ENCODE measurements at regions of chr1 and their contacts with region 1.

Region 1: DNA sequence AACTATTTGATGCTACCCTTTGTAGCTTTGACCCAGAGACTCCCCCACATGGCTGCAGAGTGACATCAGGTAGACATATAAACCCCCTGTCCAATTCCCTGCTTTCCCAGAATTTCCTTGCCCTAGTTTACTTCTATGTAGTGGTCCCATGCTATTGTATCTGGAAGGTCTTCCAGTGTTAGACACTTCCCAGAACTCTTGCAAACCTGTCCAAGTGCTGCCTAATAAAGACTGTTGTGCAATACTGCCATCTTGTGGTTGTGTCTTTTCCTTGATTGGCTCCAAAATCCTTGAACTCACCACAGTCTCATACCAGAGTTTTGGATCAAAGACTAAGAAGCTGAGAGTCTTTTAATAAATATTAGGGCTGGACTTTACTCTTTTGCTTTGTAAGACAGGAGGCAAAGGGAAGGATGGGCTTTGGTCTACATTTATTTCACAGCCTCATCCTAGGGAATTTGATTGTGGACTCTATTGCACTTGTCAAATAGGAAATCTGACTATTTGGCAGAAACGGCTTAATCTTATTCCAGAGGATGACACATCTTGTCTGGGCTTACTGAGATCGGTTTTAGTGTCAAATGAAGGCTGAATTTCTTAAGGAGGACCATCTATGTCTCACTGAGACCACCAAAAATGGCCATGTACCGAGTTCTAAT is 169.9 kb downstream of the LRRC7 start:
- DNase-seq: peak; percentile 11 to 52 (median 28)
- H3K4me3 ChIP-seq: no peak overlapping the region
- H3K27ac ChIP-seq: no peak overlapping the region
- H3K4me1 ChIP-seq: no peaks in the 10 kb centered on the region
- H3K27me3 ChIP-seq: no peaks in the 10 kb centered on the region
- CTCF ChIP-seq: peak; percentile 51 to 68 (median 59)
- POLR2A ChIP-seq: no peak

Region 2: DNA sequence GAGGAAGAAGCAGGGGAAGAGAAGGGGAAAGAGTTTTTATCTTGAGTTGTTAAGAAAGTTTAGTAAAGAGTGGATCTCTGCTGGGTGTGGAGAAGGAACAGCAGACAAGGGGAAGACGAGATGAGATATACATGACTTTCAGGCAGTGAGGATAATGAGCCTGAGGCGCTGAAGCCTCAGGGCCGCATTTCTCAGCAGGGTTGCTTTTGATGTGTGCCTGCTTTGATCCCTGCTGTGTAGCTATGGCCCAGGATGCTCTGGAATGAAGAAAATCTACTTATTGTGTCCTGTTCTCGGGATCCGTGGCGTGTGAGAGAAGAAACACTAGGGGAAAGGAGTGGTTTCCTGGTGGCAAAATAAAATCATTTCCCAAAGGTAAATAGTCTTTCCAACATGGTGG is 1272.8 kb before region 1 on chr1:
- intact Hi-C with region 1: loop called (anchors 5 to 10 kb)
- DNase-seq: no peak
- H3K4me3 ChIP-seq: no peak overlapping the region
- H3K27ac ChIP-seq: no peak overlapping the region
- H3K4me1 ChIP-seq: no peaks in the 10 kb centered on the region
- H3K27me3 ChIP-seq: no peaks in the 10 kb centered on the region
- CTCF ChIP-seq: no peak
- POLR2A ChIP-seq: no peak

Region 3: GRCh38 chr1:68470388-68470970 is 1267.2 kb before region 1 on chr1:
- intact Hi-C with region 1: loop called (anchors 5 to 10 kb)
- DNase-seq: peak in 1 of 7 donors; percentile 8
- H3K4me3 ChIP-seq: no peak overlapping the region
- H3K27ac ChIP-seq: no peak overlapping the region
- H3K4me1 ChIP-seq: no peaks in the 10 kb centered on the region
- H3K27me3 ChIP-seq: no peaks in the 10 kb centered on the region
- CTCF ChIP-seq: peak; percentile 26 to 61 (median 37)
- POLR2A ChIP-seq: no peak

Region 4: GRCh38 chr1:69836971-69837636 is 99.4 kb after region 1 on chr1:
- intact Hi-C with region 1: no loop called
- DNase-seq: no peak
- H3K4me3 ChIP-seq: no peak overlapping the region
- H3K27ac ChIP-seq: no peak overlapping the region
- H3K4me1 ChIP-seq: no peaks in the 10 kb centered on the region
- H3K27me3 ChIP-seq: no peaks in the 10 kb centered on the region
- CTCF ChIP-seq: no peak
- POLR2A ChIP-seq: no peak